Caco-2 (cell line): ENCODE measurements at regions of chr16 and their contacts with region 1.

Region 1: GRCh38 chr16:84952335-84953189 is 58.8 kb downstream of the ZDHHC7 start:
- DNase-seq: peak; percentile 83 to 89
- H3K4me3 ChIP-seq: no peak overlapping the region
- H3K4me3 Mint-ChIP-seq: no peak overlapping the region
- H3K27ac Mint-ChIP-seq: no peak overlapping the region
- H3K4me1 ChIP-seq: peaks cover 37% of the 10 kb centered on the region
- H3K4me1 Mint-ChIP-seq: no peaks in the 10 kb centered on the region
- H3K27me3 ChIP-seq: no peaks in the 10 kb centered on the region
- H3K27me3 Mint-ChIP-seq: no peaks in the 10 kb centered on the region
- CTCF ChIP-seq: peak; percentile 95

Region 2: GRCh38 chr16:84754353-84754856 is 198.2 kb before region 1 on chr16:
- CTCF ChIA-PET with region 1: interaction called, 10 read pairs
- POLR2A ChIA-PET with region 1: no interaction called
- intact Hi-C with region 1: loop called (anchors 1 kb)
- DNase-seq: peak; percentile 81 to 85
- H3K4me3 ChIP-seq: no peak overlapping the region
- H3K4me3 Mint-ChIP-seq: no peak overlapping the region
- H3K27ac Mint-ChIP-seq: no peak overlapping the region
- H3K4me1 ChIP-seq: no peaks in the 10 kb centered on the region
- H3K4me1 Mint-ChIP-seq: peaks cover 6% of the 10 kb centered on the region
- H3K27me3 ChIP-seq: no peaks in the 10 kb centered on the region
- H3K27me3 Mint-ChIP-seq: no peaks in the 10 kb centered on the region
- CTCF ChIP-seq: peak; percentile 74 to 95

Region 3: DNA sequence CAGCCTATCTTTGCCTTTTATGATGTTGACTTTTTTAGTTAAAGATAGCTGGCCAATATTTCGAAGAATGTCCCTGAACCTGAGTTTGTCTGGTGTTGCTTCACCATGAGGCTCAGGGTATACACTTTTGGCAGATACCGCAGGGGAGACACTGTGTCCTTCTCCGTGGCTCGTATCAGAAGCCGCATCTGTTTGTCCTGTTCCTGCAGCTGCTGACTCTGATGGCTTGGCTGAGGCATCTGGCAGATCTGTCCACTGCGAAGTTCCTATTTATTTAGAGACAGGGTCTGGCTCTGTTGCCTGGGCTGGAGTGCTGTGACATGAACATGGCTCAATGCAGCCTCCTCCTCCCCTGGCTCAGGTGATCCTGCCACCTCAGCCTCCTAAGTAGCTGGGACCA is 39.2 kb before region 1 on chr16:
- CTCF ChIA-PET with region 1: interaction called, 3 read pairs
- POLR2A ChIA-PET with region 1: no interaction called
- intact Hi-C with region 1: loop called (anchors 5 kb)
- DNase-seq: peak in 1 of 2 experiments; percentile 30
- H3K4me3 ChIP-seq: no peak overlapping the region
- H3K4me3 Mint-ChIP-seq: no peak overlapping the region
- H3K27ac Mint-ChIP-seq: no peak overlapping the region
- H3K4me1 ChIP-seq: no peaks in the 10 kb centered on the region
- H3K4me1 Mint-ChIP-seq: no peaks in the 10 kb centered on the region
- H3K27me3 ChIP-seq: no peaks in the 10 kb centered on the region
- H3K27me3 Mint-ChIP-seq: peaks cover 12% of the 10 kb centered on the region
- CTCF ChIP-seq: no peak

Region 4: DNA sequence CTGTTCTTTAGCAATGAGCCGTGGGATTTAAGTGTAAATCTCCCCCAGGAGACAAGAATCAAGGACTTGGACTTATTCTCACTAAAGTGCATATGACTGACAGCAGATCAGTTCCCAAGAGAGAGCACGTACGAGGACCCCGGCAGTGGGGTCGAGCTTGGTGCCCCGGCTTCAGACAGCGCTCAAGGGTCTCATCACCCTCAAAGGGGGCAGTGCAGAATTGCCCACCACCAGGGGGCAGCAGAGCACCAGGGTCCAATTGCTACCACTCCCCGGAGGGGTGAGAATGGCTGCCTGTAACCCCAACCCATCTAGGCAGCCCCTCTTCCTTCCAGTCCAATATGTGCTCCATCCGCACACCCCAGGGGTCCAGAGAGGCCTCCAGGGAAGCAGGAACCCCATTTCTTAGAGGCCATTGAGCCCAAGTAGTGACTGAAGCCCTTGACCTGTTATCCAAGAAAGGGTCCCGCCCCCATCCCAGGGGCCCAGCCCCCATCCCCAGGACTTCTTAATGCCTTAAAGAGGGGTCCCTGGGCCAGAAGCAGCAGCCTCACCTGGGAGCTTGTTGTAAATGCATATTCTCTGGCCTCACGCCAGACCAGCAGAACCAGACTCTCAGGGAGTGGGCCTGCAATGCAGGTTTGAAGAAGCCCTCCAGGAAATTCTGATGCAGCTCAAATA is 27.3 kb before region 1 on chr16:
- CTCF ChIA-PET with region 1: interaction called, 27 read pairs
- POLR2A ChIA-PET with region 1: interaction called, 3 read pairs
- intact Hi-C with region 1: loop called (anchors 1 kb)
- DNase-seq: peak; percentile 76 to 87
- H3K4me3 ChIP-seq: no peak overlapping the region
- H3K4me3 Mint-ChIP-seq: no peak overlapping the region
- H3K27ac Mint-ChIP-seq: no peak overlapping the region
- H3K4me1 ChIP-seq: peaks cover 16% of the 10 kb centered on the region
- H3K4me1 Mint-ChIP-seq: peaks cover 8% of the 10 kb centered on the region
- H3K27me3 ChIP-seq: no peaks in the 10 kb centered on the region
- H3K27me3 Mint-ChIP-seq: no peaks in the 10 kb centered on the region
- CTCF ChIP-seq: peak; percentile 94 to 97

Region 5: DNA sequence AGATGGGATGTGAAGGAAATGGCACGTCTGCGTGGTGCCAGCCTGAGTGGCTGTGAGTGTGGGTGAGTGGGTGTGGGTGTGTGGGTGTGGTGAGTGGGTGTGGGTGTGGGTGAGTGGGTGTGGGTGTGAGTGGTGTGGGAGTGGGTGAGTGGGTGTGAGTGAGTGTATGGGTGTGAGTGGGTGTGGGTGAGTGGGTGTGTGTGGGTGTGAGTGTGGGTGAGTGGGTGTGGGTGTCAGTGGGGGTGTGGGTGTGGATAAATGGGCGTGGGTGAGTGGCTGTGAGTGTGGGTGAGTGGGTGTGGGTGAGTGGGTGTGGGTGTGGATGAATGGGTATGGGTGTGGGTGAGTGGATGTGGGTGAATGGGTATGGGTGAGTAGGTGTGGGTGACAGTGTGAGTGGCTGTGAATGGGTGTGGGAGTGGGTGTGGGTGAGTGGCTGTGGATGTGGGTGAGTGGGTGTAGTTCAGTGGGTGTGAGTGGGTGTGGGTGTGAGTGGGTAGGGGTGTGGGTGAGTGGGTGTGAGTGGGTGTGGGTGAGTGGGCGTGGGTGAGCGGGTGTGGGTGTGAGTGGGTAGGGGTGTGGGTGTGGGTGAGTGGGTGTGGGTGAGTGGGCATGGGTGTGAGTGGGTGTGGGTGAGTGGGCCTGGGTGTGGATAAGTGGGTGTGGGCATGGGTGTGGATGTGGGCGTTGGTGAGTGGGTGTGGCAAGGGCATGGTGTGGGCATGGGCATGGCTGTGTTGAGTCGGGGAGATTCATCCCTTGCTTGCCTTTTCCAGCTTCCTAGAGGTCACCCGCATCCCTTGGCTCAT is 22.1 kb before region 1 on chr16:
- CTCF ChIA-PET with region 1: interaction called, 27 read pairs
- POLR2A ChIA-PET with region 1: interaction called, 3 read pairs
- intact Hi-C with region 1: loop called (anchors 1 kb)
- DNase-seq: no peak
- H3K4me3 ChIP-seq: no peak overlapping the region
- H3K4me3 Mint-ChIP-seq: no peak overlapping the region
- H3K27ac Mint-ChIP-seq: no peak overlapping the region
- H3K4me1 ChIP-seq: peaks cover under 1% of the 10 kb centered on the region; the same call in 1 of the 2 replicates
- H3K4me1 Mint-ChIP-seq: no peaks in the 10 kb centered on the region
- H3K27me3 ChIP-seq: no peaks in the 10 kb centered on the region
- H3K27me3 Mint-ChIP-seq: no peaks in the 10 kb centered on the region
- CTCF ChIP-seq: no peak

Region 6: DNA sequence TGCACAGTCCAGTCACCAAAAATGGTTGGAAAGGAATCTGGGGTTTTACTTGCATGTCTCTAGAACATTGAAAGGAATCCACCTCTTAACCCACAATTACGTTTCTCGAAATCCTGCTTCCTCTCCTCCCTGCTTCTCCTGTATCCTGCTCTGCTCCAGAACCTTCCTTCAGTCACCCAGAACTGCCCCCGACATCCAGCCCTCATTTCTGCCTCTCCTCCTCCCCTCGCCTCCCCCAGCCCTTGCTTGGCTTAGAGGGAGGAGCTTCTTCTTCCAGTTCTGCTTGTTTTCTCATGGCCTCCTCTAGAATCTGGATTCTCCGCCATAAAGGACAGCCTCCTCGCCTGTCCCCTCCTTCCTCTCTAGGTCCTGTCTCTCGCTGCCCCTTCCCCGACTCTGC is 10.5 kb after region 1 on chr16:
- CTCF ChIA-PET with region 1: interaction called, 24 read pairs
- POLR2A ChIA-PET with region 1: no interaction called
- intact Hi-C with region 1: no loop called
- DNase-seq: no peak
- H3K4me3 ChIP-seq: no peak overlapping the region
- H3K4me3 Mint-ChIP-seq: no peak overlapping the region
- H3K27ac Mint-ChIP-seq: no peak overlapping the region
- H3K4me1 ChIP-seq: no peaks in the 10 kb centered on the region
- H3K4me1 Mint-ChIP-seq: peaks cover 7% of the 10 kb centered on the region
- H3K27me3 ChIP-seq: no peaks in the 10 kb centered on the region
- H3K27me3 Mint-ChIP-seq: no peaks in the 10 kb centered on the region
- CTCF ChIP-seq: no peak

Region 7: DNA sequence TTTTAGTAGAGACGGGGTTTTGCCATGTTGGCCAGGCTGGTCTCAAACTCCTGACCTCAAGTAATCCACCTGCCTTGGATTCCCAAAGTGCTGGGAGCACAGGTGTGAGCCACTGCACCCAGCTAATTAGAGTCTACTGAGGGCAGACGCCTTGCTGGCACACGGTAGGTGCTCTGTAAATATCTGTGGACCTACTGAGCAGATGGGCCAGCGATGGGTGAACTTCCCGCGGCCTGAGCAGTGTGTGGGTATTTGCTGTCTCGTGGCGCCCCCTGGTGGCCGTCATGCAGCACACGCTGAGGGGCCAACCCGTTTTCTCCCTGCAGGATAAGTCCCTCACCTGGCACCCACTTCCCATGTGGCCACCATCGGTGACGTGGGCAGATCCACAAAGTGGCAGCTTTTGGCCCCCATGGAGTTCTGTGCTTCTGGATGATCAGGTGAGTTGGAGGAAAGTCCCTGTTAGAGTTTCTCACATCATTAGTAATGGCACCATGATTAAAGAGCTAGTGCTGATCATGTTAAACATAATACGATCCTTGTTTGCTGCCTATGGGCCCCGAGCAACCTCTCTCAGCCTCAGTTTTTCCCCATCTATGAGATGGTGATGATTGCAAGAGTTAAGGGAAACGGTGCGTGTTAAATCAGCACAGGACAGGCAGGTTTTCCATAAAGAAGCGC is 18.0 kb after region 1 on chr16:
- CTCF ChIA-PET with region 1: interaction called, 24 read pairs
- POLR2A ChIA-PET with region 1: no interaction called
- intact Hi-C with region 1: loop called (anchors 1 kb)
- DNase-seq: peak; percentile 82 to 86
- H3K4me3 ChIP-seq: no peak overlapping the region
- H3K4me3 Mint-ChIP-seq: no peak overlapping the region
- H3K27ac Mint-ChIP-seq: no peak overlapping the region
- H3K4me1 ChIP-seq: no peaks in the 10 kb centered on the region
- H3K4me1 Mint-ChIP-seq: peaks cover 7% of the 10 kb centered on the region
- H3K27me3 ChIP-seq: no peaks in the 10 kb centered on the region
- H3K27me3 Mint-ChIP-seq: no peaks in the 10 kb centered on the region
- CTCF ChIP-seq: peak; percentile 91 to 97